Mucosa of descending colon (tissue), 3 donors: ENCODE measurements at regions of chr12 and their contacts with region 1.

Region 1: GRCh38 chr12:53743266-53744129 is 8.3 kb downstream of the CISTR start:
- DNase-seq: peak in 2 of 3 donors; percentile 49 to 61
- ATAC-seq: peak; percentile 62
- H3K4me3 ChIP-seq: no peak overlapping the region
- H3K4me1 ChIP-seq: peaks cover 12% of the 10 kb centered on the region
- CTCF ChIP-seq: peak; percentile 90

Region 2: GRCh38 chr12:53352331-53353256 is 390.9 kb before region 1 on chr12:
- intact Hi-C with region 1: no loop called
- DNase-seq: peak in 2 of 3 donors; percentile 78 to 93
- ATAC-seq: peak; percentile 99
- H3K4me3 ChIP-seq: no peak overlapping the region
- H3K4me1 ChIP-seq: peaks cover 11% of the 10 kb centered on the region
- CTCF ChIP-seq: peak; percentile 65

Region 3: DNA sequence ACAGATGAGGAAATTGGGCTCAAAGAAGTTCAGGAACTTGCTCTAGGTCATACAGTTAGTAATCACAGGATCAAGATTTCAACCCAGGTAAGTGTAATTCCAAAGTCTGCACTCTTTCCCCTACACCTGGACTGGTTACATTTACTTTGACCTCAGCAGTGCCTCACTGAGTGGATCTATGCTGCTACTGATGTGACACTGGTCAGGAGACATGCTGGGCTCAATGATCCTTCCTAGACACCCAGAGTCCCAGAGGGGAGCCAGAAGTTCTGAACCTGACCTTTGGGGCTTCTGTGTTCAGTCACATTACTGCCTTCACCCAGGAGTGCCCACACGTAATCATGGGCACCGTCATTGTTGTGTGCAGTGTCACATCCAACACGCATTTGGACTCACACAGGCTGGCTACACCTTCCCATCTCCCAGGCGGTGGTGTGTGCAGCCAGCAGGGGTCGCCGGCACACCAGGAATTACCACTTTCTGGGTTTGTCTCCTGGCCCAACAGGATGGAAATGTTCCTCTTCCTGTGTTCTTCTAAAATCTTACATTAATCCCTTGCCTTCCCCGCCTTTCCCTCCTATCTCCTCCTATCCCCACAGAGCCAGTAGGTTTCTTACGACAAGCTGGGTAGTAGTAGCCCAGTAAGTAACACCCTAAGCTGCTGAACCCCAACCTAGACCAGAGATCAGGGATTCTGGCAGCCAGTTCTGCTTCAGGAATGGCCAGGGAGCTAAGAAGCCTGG is 41.8 kb before region 1 on chr12:
- intact Hi-C with region 1: loop called (anchors 5 kb)
- DNase-seq: peak; percentile 61 to 89 (median 89)
- ATAC-seq: peak; percentile 93
- H3K4me3 ChIP-seq: no peak overlapping the region
- H3K4me1 ChIP-seq: no peaks in the 10 kb centered on the region
- CTCF ChIP-seq: peak; percentile 85

Region 4: GRCh38 chr12:54134850-54135249 is 391.4 kb after region 1 on chr12:
- intact Hi-C with region 1: no loop called
- DNase-seq: no peak
- ATAC-seq: no peak
- H3K4me3 ChIP-seq: no peak overlapping the region
- H3K4me1 ChIP-seq: no peaks in the 10 kb centered on the region
- CTCF ChIP-seq: no peak